Caco-2 (cell line): ENCODE measurements at regions of chr4 and their contacts with region 1.

Region 1: GRCh38 chr4:10832806-10833628 is 148.4 kb upstream of the CLNK start:
- DNase-seq: no peak
- H3K4me3 ChIP-seq: no peak overlapping the region
- H3K4me3 Mint-ChIP-seq: no peak overlapping the region
- H3K27ac Mint-ChIP-seq: no peak overlapping the region
- H3K4me1 ChIP-seq: peaks cover 52% of the 10 kb centered on the region
- H3K4me1 Mint-ChIP-seq: peaks cover 41% of the 10 kb centered on the region
- H3K27me3 ChIP-seq: no peaks in the 10 kb centered on the region
- H3K27me3 Mint-ChIP-seq: no peaks in the 10 kb centered on the region
- CTCF ChIP-seq: no peak

Region 2: GRCh38 chr4:10554694-10555093 is 278.3 kb before region 1 on chr4:
- CTCF ChIA-PET with region 1: no interaction called
- POLR2A ChIA-PET with region 1: no interaction called
- intact Hi-C with region 1: no loop called
- DNase-seq: peak; percentile 43 to 70
- H3K4me3 ChIP-seq: no peak overlapping the region
- H3K4me3 Mint-ChIP-seq: no peak overlapping the region
- H3K27ac Mint-ChIP-seq: no peak overlapping the region
- H3K4me1 ChIP-seq: no peaks in the 10 kb centered on the region
- H3K4me1 Mint-ChIP-seq: no peaks in the 10 kb centered on the region
- H3K27me3 ChIP-seq: no peaks in the 10 kb centered on the region
- H3K27me3 Mint-ChIP-seq: peaks cover 3% of the 10 kb centered on the region
- CTCF ChIP-seq: peak; percentile 70 to 75

Region 3: DNA sequence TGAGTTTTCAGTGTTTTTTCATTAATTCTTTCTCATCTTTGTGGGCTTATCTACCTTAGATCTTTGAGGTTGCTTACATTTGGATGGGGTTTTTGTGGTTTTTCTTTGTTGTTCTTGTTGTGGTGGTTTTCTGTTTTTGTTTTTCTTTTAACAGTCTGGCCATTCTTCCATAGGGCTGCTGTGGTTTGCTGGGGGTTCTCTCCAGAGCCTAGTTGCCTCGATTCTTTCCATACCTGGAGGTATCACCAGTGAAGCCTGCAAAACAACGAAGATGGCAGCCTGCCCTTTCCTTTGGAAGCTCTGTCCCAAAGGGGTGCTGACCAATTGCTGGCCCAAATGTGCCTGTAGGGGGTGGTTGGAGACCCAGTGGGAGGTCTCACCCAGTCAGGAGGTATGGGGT is 20.2 kb after region 1 on chr4:
- CTCF ChIA-PET with region 1: no interaction called
- POLR2A ChIA-PET with region 1: no interaction called
- intact Hi-C with region 1: loop called (anchors 1 kb)
- DNase-seq: no peak
- H3K4me3 ChIP-seq: no peak overlapping the region
- H3K4me3 Mint-ChIP-seq: no peak overlapping the region
- H3K27ac Mint-ChIP-seq: no peak overlapping the region
- H3K4me1 ChIP-seq: peaks cover 36% of the 10 kb centered on the region
- H3K4me1 Mint-ChIP-seq: peaks cover 34% of the 10 kb centered on the region
- H3K27me3 ChIP-seq: no peaks in the 10 kb centered on the region
- H3K27me3 Mint-ChIP-seq: no peaks in the 10 kb centered on the region
- CTCF ChIP-seq: no peak